PC-9 (cell line): ENCODE measurements at regions of chr6 and their contacts with region 1.

Region 1: DNA sequence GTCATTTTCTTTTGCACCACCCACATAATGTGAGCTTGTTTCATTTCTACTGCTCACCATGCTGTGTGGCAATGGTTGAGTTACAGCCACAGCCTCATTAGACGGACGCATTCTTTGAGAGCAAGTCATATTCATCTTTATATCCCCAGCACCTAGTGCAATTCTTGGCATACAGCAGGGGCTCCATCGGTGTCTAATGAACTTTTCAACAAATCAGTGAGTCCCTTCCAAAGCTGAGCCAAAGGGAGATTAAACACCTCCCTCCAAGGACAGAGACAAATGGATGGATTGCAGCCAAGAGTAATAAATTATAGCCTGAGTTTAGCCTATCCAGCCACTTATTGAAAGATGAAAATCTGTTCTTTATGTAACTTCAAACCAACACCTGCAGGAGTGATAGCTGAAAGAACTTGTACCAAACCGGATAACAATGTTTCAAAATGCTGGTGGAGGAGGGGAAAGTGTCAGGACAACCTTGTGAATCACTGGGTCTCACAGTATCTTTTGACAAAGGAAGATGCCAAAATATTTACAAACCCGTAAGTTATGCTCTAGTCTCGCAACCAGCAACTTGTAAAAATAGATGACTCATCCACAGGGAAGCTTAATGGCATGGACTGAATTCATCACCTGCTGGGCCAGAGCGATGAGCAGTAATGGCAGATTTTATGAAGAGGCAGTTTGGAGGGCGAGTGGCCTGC is 139.0 kb downstream of the PXDC1 start:
- DNase-seq: peak; percentile 48 to 94
- H3K4me3 ChIP-seq: no peak overlapping the region
- H3K27ac ChIP-seq: peak overlapping the region; percentile 78
- H3K4me1 ChIP-seq: peaks cover 44% of the 10 kb centered on the region
- H3K27me3 ChIP-seq: no peaks in the 10 kb centered on the region
- CTCF ChIP-seq: no peak

Region 2: GRCh38 chr6:3510178-3510976 is 102.1 kb before region 1 on chr6:
- CTCF ChIA-PET with region 1: no interaction called
- POLR2A ChIA-PET with region 1: no interaction called
- intact Hi-C with region 1: loop called (anchors 5 kb)
- DNase-seq: no peak
- H3K4me3 ChIP-seq: no peak overlapping the region
- H3K27ac ChIP-seq: no peak overlapping the region
- H3K4me1 ChIP-seq: peaks cover 34% of the 10 kb centered on the region
- H3K27me3 ChIP-seq: no peaks in the 10 kb centered on the region
- CTCF ChIP-seq: no peak

Region 3: DNA sequence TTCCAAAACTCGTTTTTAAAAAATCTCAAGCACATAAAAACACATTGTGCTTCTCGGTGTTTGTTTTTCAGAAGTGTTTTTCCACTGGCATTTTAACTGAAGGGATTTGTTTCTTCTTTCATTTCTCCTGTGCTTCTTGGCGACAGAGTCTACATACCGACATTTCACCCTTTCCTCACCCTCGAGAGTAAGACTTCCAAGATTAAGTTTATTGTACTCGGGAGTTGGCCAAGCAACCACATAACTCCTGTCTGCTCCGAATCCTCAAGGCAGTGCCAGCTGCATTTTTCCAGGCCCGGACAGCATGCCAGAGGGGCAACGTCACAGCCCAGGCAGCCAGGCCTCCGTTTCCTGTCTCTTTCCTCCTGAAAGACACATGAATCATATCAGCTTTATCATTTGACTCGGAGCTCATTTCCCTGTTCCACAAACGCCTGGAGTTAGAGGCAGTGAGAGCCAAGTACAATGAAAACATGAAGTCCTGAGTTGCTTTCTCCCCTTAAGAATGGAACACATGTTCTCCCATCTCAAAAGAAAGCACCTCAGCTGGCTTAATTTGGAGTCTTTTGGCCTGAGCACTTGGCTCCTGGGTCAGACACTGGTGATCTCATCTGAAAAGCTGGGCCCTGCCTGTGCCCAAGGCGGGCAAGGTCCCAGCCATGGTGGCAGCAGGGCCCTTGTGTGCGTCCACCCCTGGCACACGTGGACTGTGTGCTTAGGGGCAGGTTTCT is 213.5 kb after region 1 on chr6:
- CTCF ChIA-PET with region 1: no interaction called
- POLR2A ChIA-PET with region 1: no interaction called
- intact Hi-C with region 1: no loop called
- DNase-seq: peak; percentile 94
- H3K4me3 ChIP-seq: peak overlapping the region; percentile 20; the same call in 1 of the 2 replicates
- H3K27ac ChIP-seq: peak overlapping the region; percentile 87
- H3K4me1 ChIP-seq: peaks cover 50% of the 10 kb centered on the region
- H3K27me3 ChIP-seq: no peaks in the 10 kb centered on the region
- CTCF ChIP-seq: no peak

Region 4: DNA sequence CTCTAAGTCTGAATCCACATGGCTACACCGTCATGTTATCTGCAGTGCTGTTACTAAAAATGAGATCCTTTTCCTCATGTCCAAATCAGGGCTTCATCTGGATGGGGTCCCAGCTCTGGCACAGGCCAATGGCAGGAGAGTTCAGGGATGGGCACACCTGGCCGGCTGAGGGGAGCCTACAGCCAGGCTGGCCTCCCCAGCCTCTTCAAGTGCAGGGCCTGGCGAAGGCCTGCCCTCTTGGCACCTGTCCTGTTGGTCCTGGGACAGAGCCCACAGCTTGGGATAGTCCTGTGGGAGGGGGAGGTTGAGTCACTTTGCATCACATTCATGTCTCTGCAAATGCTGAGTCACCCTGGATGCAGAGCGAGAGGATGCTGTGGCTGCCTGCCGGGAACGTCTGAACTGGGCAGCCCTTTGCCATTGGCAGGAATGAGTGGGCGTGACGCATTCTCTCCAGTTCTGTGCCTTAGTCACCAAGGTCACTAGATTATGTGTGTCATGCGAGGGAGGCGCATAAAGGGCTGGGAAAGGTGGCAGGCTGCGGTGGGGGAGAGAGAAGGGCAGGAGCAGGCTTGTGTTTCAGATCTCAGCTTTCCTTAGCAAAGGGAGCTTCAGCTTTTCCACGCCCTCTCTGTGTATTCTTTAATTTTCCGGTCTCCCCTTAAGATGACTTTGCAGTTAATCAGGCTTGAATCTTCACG is 746.1 kb after region 1 on chr6:
- CTCF ChIA-PET with region 1: no interaction called
- POLR2A ChIA-PET with region 1: no interaction called
- intact Hi-C with region 1: no loop called
- DNase-seq: peak; percentile 98
- H3K4me3 ChIP-seq: peak overlapping the region; percentile 49; the same call in 1 of the 2 replicates
- H3K27ac ChIP-seq: peak overlapping the region; percentile 100
- H3K4me1 ChIP-seq: peaks cover 55% of the 10 kb centered on the region
- H3K27me3 ChIP-seq: no peaks in the 10 kb centered on the region
- CTCF ChIP-seq: no peak